CD4-positive, alpha-beta T cell (primary cell): ENCODE measurements at regions of chr9 and their contacts with region 1.

Region 1: DNA sequence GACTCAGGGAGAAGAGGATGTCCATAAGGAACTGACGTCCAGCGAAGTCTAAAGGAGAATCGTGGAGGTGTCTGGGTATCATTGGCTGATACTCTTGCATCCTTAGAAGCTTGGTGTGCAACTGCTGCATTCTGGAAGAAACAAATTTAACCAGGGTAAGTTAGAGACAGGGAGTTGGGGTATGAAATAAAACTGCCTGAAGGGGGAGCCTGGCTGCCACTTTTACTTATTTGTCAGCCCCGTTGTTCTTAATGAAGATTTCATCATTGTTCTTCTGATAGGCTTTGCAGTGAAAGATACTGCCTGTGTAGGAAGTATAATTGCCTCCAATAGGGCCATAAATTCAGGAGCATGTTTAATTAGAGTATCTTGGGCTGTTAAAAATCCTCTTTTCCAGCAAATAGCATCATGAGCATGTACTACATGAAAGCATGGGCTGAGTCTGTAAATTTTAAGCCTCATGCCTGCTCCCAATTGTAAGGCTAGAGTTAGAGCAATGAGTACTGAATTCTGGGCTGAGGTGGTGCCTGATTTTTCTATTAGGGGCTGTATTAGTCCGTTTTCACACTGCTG is 1264.5 kb upstream of the ACO1 start:
- DNase-seq: peak; percentile 2 to 74 (median 32)
- ATAC-seq: peak; percentile 75
- H3K4me3 ChIP-seq: no peak overlapping the region
- H3K4me3 Mint-ChIP-seq: no peak overlapping the region
- H3K27ac ChIP-seq: no peak overlapping the region
- H3K27ac Mint-ChIP-seq: no peak overlapping the region
- H3K4me1 ChIP-seq: no peaks in the 10 kb centered on the region
- H3K4me1 Mint-ChIP-seq: peaks cover 8% of the 10 kb centered on the region
- H3K27me3 ChIP-seq: no peaks in the 10 kb centered on the region
- H3K27me3 Mint-ChIP-seq: no peaks in the 10 kb centered on the region
- CTCF ChIP-seq: peak; percentile 78

Region 2: GRCh38 chr9:31323726-31324444 is 203.9 kb after region 1 on chr9:
- CTCF ChIA-PET with region 1: no interaction called
- POLR2A ChIA-PET with region 1: no interaction called
- intact Hi-C with region 1: loop called in 1 of 2 experiments (anchors 5 kb)
- DNase-seq: peak in 5 of 14 experiments; percentile 14 to 58 (median 39)
- ATAC-seq: peak; percentile 79
- H3K4me3 ChIP-seq: no peak overlapping the region
- H3K4me3 Mint-ChIP-seq: peak overlapping the region; percentile 5
- H3K27ac ChIP-seq: peak overlapping the region; percentile 33 to 67
- H3K27ac Mint-ChIP-seq: peak overlapping the region; percentile 78
- H3K4me1 ChIP-seq: peaks cover 16% of the 10 kb centered on the region
- H3K4me1 Mint-ChIP-seq: peaks cover 42% of the 10 kb centered on the region
- H3K27me3 ChIP-seq: no peaks in the 10 kb centered on the region
- H3K27me3 Mint-ChIP-seq: no peaks in the 10 kb centered on the region
- CTCF ChIP-seq: no peak

Region 3: GRCh38 chr9:31542384-31543055 is 422.6 kb after region 1 on chr9:
- CTCF ChIA-PET with region 1: no interaction called
- POLR2A ChIA-PET with region 1: no interaction called
- intact Hi-C with region 1: loop called (anchors 1 to 5 kb)
- DNase-seq: peak in 9 of 14 experiments; percentile 1 to 62 (median 9)
- ATAC-seq: peak; percentile 80
- H3K4me3 ChIP-seq: no peak overlapping the region
- H3K4me3 Mint-ChIP-seq: no peak overlapping the region
- H3K27ac ChIP-seq: no peak overlapping the region
- H3K27ac Mint-ChIP-seq: no peak overlapping the region
- H3K4me1 ChIP-seq: no peaks in the 10 kb centered on the region
- H3K4me1 Mint-ChIP-seq: peaks cover 20% of the 10 kb centered on the region
- H3K27me3 ChIP-seq: no peaks in the 10 kb centered on the region
- H3K27me3 Mint-ChIP-seq: no peaks in the 10 kb centered on the region
- CTCF ChIP-seq: peak; percentile 28

Region 4: GRCh38 chr9:32251539-32251938 is 1131.6 kb after region 1 on chr9:
- CTCF ChIA-PET with region 1: no interaction called
- POLR2A ChIA-PET with region 1: no interaction called
- intact Hi-C with region 1: loop called (anchors 1 to 2 kb)
- DNase-seq: peak in 10 of 14 experiments; percentile 0 to 48 (median 6)
- ATAC-seq: peak; percentile 39
- H3K4me3 ChIP-seq: no peak overlapping the region
- H3K4me3 Mint-ChIP-seq: no peak overlapping the region
- H3K27ac ChIP-seq: no peak overlapping the region
- H3K27ac Mint-ChIP-seq: no peak overlapping the region
- H3K4me1 ChIP-seq: no peaks in the 10 kb centered on the region
- H3K4me1 Mint-ChIP-seq: no peaks in the 10 kb centered on the region
- H3K27me3 ChIP-seq: no peaks in the 10 kb centered on the region
- H3K27me3 Mint-ChIP-seq: peaks cover 14% of the 10 kb centered on the region
- CTCF ChIP-seq: peak; percentile 39

Region 5: DNA sequence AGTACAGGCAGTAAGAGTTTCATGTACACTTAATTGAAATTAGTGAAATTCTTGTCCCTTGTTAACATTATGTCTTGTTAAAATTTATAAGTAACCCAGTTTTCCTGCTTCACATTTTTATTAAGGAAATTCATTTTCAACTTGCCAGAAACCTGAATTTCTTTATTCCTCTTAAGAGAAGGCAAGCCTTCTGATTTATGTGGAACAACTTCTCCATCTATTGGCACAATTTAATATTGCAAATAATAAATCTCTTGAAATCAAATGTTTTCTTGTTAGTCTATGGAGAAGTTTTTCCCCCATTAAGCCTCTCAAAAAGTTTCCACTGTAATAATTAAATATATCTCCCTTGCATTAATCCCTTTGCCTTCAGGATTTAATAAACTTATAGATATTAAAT is 1230.7 kb after region 1 on chr9:
- CTCF ChIA-PET with region 1: no interaction called
- POLR2A ChIA-PET with region 1: no interaction called
- intact Hi-C with region 1: loop called (anchors 5 to 10 kb)
- DNase-seq: peak in 3 of 14 experiments; percentile 8 to 24 (median 23)
- ATAC-seq: no peak
- H3K4me3 ChIP-seq: no peak overlapping the region
- H3K4me3 Mint-ChIP-seq: no peak overlapping the region
- H3K27ac ChIP-seq: no peak overlapping the region
- H3K27ac Mint-ChIP-seq: no peak overlapping the region
- H3K4me1 ChIP-seq: no peaks in the 10 kb centered on the region
- H3K4me1 Mint-ChIP-seq: no peaks in the 10 kb centered on the region
- H3K27me3 ChIP-seq: no peaks in the 10 kb centered on the region
- H3K27me3 Mint-ChIP-seq: no peaks in the 10 kb centered on the region
- CTCF ChIP-seq: peak; percentile 33